Activated CD4-positive, alpha-beta T cell treated with anti-CD3 and anti-CD28 coated beads, Interleukin-2, amount 10 ng/mL, durations not matched to agents 7 days and 5 days (primary cell): ENCODE measurements at regions of chr12 and their contacts with region 1.

Region 1: DNA sequence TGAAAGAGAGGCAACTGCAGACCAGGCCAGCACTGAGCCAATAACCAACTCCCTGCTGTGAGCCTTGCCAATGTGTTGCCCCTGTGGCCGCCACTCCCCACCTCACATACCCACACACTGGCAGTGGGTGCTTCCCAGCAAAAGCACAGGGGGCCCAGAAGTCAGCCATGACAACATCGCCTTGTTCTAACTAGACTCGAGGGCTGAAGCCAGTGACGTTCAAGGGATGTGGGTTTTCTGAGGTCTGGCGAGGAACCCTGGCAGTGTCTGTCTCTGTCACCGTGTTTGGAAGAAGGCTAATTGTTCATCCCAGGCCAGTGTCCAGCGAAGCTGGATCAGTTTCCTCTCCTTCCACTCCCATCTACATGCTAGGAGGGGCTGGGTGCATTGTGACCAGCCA is 311.8 kb upstream of the AMIGO2 start:
- DNase-seq: peak; percentile 63
- H3K4me3 Mint-ChIP-seq: no peak overlapping the region
- H3K27ac Mint-ChIP-seq: peak overlapping the region; percentile 95
- H3K4me1 Mint-ChIP-seq: peaks cover 76% of the 10 kb centered on the region
- H3K27me3 Mint-ChIP-seq: no peaks in the 10 kb centered on the region

Region 2: GRCh38 chr12:47277972-47278448 is 113.6 kb before region 1 on chr12:
- CTCF ChIA-PET with region 1: no interaction called
- POLR2A ChIA-PET with region 1: no interaction called
- DNase-seq: no peak
- H3K4me3 Mint-ChIP-seq: no peak overlapping the region
- H3K27ac Mint-ChIP-seq: peak overlapping the region; percentile 91
- H3K4me1 Mint-ChIP-seq: peaks cover 73% of the 10 kb centered on the region
- H3K27me3 Mint-ChIP-seq: no peaks in the 10 kb centered on the region

Region 3: DNA sequence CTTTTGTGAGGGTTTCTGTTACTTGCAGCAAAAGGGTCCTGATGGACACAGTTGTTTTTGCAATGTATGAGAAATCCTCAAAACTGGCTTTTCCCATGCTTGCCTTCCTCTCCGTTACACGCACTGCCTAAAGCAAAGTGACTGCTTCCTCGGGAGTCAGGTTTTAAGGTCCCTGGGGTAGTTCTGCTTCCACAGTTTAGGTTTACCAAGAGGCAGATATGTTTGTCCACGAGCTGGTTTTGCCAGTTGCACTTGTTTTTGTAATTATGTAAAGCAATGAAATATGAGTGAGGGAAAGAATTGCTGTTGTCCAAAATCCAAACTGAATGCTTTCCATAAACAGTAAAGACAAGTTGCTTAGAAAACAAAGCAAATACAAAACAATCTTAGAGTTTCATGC is 21.1 kb before region 1 on chr12:
- CTCF ChIA-PET with region 1: interaction called, 14 read pairs
- POLR2A ChIA-PET with region 1: interaction called, 3 read pairs
- DNase-seq: no peak
- H3K4me3 Mint-ChIP-seq: no peak overlapping the region
- H3K27ac Mint-ChIP-seq: no peak overlapping the region
- H3K4me1 Mint-ChIP-seq: peaks cover 10% of the 10 kb centered on the region
- H3K27me3 Mint-ChIP-seq: no peaks in the 10 kb centered on the region

Region 4: DNA sequence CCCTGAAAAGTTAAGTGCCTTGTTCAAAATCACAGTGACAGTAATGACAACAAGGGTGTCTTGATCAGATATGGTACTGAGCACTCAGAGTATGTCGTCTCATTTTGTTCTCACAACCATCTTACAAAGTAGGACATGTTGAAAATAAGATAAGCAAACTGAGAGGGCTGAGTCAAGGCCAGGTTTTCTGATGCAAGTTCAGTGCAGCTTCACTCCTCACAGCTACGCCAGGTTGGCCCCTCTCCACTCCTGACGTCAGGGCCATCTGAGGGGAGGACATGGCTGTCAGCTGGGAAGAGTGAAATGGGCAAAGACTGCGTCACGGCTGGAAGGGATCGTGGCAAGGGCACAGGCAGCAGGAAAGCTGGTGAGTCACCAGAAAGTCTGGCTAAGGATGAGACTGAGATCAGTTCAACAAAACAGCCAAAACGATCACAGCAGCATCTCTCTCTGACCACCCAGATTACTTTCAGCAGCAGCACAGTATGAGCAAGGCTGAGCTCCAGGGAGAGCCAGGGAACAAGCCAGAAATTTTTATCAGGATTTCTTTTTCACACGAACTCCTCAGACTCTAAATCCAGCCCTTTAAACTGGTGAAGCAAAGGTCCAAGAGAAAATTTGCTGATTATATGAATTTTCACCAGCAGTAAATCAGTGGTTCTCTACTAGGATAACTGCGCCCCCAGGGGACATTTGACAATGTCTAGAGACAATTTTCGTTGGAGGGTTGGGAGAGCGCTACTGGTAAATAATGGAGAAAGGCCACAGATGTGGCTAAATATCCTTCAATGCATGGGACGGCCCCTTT is 13.9 kb before region 1 on chr12:
- CTCF ChIA-PET with region 1: interaction called, 11 read pairs
- POLR2A ChIA-PET with region 1: no interaction called
- DNase-seq: no peak
- H3K4me3 Mint-ChIP-seq: no peak overlapping the region
- H3K27ac Mint-ChIP-seq: peak overlapping the region; percentile 5
- H3K4me1 Mint-ChIP-seq: peaks cover 36% of the 10 kb centered on the region
- H3K27me3 Mint-ChIP-seq: no peaks in the 10 kb centered on the region